ENCODE measurements at regions of chr13 and their contacts with region 1.

Region 1: DNA sequence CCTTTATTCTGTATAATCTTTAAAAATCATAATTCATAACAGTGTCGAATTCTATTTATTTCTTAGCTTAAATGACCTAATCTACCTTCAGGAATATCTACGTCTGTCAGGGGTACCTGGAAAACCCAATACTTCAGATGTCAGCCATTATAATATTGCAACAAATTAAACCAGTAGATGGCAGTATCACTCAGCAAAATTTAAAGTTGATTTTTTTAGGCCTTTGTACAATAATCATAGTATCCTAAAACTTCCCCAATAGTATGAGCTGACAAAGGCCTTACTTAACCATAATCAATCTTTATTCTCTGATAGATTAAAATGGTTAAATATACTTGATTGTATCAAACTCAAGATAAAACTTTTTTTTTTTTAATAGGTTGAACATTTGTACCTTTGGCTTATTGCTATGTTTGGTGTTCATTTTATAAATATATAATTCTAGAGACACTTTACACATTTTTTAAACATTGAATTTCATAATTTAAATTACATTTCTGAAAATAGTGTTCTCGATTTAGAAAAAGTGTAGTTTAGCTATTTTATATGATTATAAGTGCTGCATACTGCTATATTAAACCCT is 830.2 kb upstream of the SPRY2 start:
- DNase-seq: peak; percentile 18
- H3K4me3 ChIP-seq: no peak overlapping the region
- H3K27ac ChIP-seq: no peak overlapping the region
- H3K4me1 ChIP-seq: no peaks in the 10 kb centered on the region
- CTCF ChIP-seq: peak; percentile 85

Region 2: DNA sequence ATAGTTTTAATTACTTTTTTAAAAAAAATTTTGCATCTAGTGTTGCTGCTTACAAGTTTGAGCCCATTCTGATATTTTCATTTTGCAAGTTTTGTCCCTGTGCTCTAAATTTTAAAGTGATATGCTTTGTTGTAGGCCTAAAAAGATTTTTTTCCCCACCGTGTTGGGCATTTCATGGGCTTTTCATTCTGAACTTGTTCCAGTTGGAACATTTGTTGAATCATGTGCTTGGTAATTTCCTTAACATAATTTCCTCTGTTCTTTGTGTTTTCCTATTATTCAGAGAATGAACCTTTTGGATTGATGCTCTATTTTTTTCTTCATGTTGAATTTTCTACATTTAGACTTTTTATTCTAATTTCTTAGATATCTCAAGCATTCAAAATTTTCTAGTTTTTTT is 623.8 kb before region 1 on chr13:
- CTCF ChIA-PET with region 1: no interaction called
- POLR2A ChIA-PET with region 1: no interaction called
- intact Hi-C with region 1: no loop called
- DNase-seq: no peak
- H3K4me3 ChIP-seq: no peak overlapping the region
- H3K27ac ChIP-seq: no peak overlapping the region
- H3K4me1 ChIP-seq: no peaks in the 10 kb centered on the region
- CTCF ChIP-seq: no peak

Region 3: GRCh38 chr13:81184556-81185265 is 13.6 kb after region 1 on chr13:
- CTCF ChIA-PET with region 1: no interaction called
- POLR2A ChIA-PET with region 1: no interaction called
- intact Hi-C with region 1: no loop called
- DNase-seq: no peak
- H3K4me3 ChIP-seq: no peak overlapping the region
- H3K27ac ChIP-seq: no peak overlapping the region
- H3K4me1 ChIP-seq: no peaks in the 10 kb centered on the region
- CTCF ChIP-seq: no peak

Region 4: GRCh38 chr13:82330499-82330898 is 1159.3 kb after region 1 on chr13:
- CTCF ChIA-PET with region 1: no interaction called
- POLR2A ChIA-PET with region 1: no interaction called
- intact Hi-C with region 1: loop called (anchors 5 kb)
- DNase-seq: peak; percentile 26
- H3K4me3 ChIP-seq: no peak overlapping the region
- H3K27ac ChIP-seq: no peak overlapping the region
- H3K4me1 ChIP-seq: no peaks in the 10 kb centered on the region
- CTCF ChIP-seq: peak; percentile 84